Calu3 (cell line): ENCODE measurements at regions of chr19 and their contacts with region 1.

Region 1: DNA sequence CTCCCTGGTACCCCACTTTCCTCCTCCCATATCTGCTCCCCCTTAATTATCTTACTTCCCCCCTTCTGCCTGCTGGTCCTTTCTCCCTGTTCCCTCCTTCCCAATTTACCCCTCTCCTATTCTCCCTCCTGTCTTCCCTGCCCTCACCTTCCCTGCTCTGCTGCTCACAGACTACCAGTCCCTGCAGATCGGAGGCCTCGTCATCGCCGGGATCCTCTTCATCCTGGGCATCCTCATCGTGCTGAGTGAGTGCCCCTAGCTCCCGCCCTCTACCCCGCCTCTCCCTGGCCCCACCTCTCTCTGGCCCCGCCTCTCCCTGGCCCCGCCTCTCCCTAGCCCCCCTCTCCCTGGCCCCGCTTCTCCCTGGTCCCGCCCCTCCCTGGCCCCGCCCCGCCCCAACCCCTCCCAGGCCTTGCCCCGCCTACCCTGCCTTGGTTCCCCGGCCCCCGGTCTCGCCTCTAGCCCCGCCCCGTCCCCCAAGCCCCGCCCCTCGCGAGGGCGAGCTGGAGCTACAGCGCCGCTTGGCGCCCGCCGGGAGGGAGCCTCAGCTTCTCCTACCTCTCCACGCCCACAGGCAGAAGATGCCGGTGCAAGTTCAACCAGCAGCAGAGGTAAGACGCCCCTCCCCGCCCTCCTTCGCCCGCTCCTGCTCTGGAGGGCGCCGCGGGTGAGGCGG is 2.0 kb upstream of the FXYD7 start:
- DNase-seq: peak; percentile 97
- H3K4me3 Mint-ChIP-seq: peak overlapping the region; percentile 46
- H3K27ac Mint-ChIP-seq: no peak overlapping the region
- H3K4me1 Mint-ChIP-seq: peaks cover 52% of the 10 kb centered on the region
- H3K27me3 Mint-ChIP-seq: peaks cover 17% of the 10 kb centered on the region
- CTCF ChIP-seq: peak; percentile 31

Region 2: GRCh38 chr19:35044317-35045117 is 96.6 kb before region 1 on chr19:
- CTCF ChIA-PET with region 1: interaction called, 11 read pairs
- intact Hi-C with region 1: no loop called
- DNase-seq: peak; percentile 82
- H3K4me3 Mint-ChIP-seq: no peak overlapping the region
- H3K27ac Mint-ChIP-seq: no peak overlapping the region
- H3K4me1 Mint-ChIP-seq: peaks cover 33% of the 10 kb centered on the region
- H3K27me3 Mint-ChIP-seq: no peaks in the 10 kb centered on the region
- CTCF ChIP-seq: peak; percentile 99

Region 3: GRCh38 chr19:35114353-35115176 is 26.5 kb before region 1 on chr19:
- CTCF ChIA-PET with region 1: interaction called, 13 read pairs
- intact Hi-C with region 1: no loop called
- DNase-seq: peak; percentile 85
- H3K4me3 Mint-ChIP-seq: peak overlapping the region; percentile 74
- H3K27ac Mint-ChIP-seq: peak overlapping the region; percentile 53
- H3K4me1 Mint-ChIP-seq: peaks cover 47% of the 10 kb centered on the region
- H3K27me3 Mint-ChIP-seq: no peaks in the 10 kb centered on the region
- CTCF ChIP-seq: peak; percentile 100

Region 4: DNA sequence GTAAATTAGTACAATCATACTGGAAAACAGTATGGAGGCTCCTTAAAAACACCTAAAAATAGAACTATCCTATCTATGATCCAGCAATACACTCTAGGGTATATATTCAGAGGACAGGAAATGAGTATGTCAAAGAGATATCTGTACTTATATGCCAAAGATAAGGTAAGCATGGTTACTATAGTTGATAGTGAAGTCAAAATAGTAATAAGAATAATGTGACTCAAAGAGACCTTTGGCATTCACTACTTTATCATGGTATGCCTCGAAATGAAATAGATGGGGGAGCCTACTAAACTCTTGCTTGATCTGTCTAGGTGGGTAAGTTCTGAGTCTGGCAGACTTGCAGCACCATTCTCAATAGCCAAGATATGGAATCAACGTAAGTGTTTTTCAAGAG is 43.8 kb after region 1 on chr19:
- CTCF ChIA-PET with region 1: no interaction called
- intact Hi-C with region 1: no loop called
- DNase-seq: no peak
- H3K4me3 Mint-ChIP-seq: no peak overlapping the region
- H3K27ac Mint-ChIP-seq: no peak overlapping the region
- H3K4me1 Mint-ChIP-seq: no peaks in the 10 kb centered on the region
- H3K27me3 Mint-ChIP-seq: no peaks in the 10 kb centered on the region
- CTCF ChIP-seq: no peak

Region 5: GRCh38 chr19:35213663-35214632 is 72.8 kb after region 1 on chr19:
- CTCF ChIA-PET with region 1: interaction called, 16 read pairs
- intact Hi-C with region 1: no loop called
- DNase-seq: peak; percentile 86
- H3K4me3 Mint-ChIP-seq: peak overlapping the region; percentile 39
- H3K27ac Mint-ChIP-seq: peak overlapping the region; percentile 75
- H3K4me1 Mint-ChIP-seq: peaks cover 22% of the 10 kb centered on the region
- H3K27me3 Mint-ChIP-seq: no peaks in the 10 kb centered on the region
- CTCF ChIP-seq: no peak

Region 6: GRCh38 chr19:35247526-35248306 is 106.6 kb after region 1 on chr19:
- CTCF ChIA-PET with region 1: interaction called, 3 read pairs
- intact Hi-C with region 1: loop called (anchors 5 kb)
- DNase-seq: peak; percentile 97
- H3K4me3 Mint-ChIP-seq: peak overlapping the region; percentile 100
- H3K27ac Mint-ChIP-seq: peak overlapping the region; percentile 96
- H3K4me1 Mint-ChIP-seq: peaks cover 42% of the 10 kb centered on the region
- H3K27me3 Mint-ChIP-seq: no peaks in the 10 kb centered on the region
- CTCF ChIP-seq: peak; percentile 50